ENCODE measurements at regions of chr19 and their contacts with region 1.

Region 1: GRCh38 chr19:58362272-58362994 is at the start of gene ZNF497:
- DNase-seq: peak; percentile 98
- ATAC-seq: peak; percentile 87
- H3K4me3 Mint-ChIP-seq: peak within 1 kb of the TSS; percentile 94
- H3K27ac Mint-ChIP-seq: peak within 1 kb of the TSS; percentile 94
- H3K4me1 Mint-ChIP-seq: peaks cover 13% of the 10 kb centered on the region
- H3K27me3 Mint-ChIP-seq: no peaks in the 10 kb centered on the region
- total RNA-seq, gene ZNF497: 1.7 to 2.1 TPM

Region 2: GRCh38 chr19:58317476-58318072 is 44.9 kb before region 1 on chr19:
- POLR2A ChIA-PET with region 1: no interaction called
- DNase-seq: no peak
- ATAC-seq: no peak
- H3K4me3 Mint-ChIP-seq: no peak overlapping the region
- H3K27ac Mint-ChIP-seq: no peak overlapping the region
- H3K4me1 Mint-ChIP-seq: no peaks in the 10 kb centered on the region
- H3K27me3 Mint-ChIP-seq: no peaks in the 10 kb centered on the region

Region 3: DNA sequence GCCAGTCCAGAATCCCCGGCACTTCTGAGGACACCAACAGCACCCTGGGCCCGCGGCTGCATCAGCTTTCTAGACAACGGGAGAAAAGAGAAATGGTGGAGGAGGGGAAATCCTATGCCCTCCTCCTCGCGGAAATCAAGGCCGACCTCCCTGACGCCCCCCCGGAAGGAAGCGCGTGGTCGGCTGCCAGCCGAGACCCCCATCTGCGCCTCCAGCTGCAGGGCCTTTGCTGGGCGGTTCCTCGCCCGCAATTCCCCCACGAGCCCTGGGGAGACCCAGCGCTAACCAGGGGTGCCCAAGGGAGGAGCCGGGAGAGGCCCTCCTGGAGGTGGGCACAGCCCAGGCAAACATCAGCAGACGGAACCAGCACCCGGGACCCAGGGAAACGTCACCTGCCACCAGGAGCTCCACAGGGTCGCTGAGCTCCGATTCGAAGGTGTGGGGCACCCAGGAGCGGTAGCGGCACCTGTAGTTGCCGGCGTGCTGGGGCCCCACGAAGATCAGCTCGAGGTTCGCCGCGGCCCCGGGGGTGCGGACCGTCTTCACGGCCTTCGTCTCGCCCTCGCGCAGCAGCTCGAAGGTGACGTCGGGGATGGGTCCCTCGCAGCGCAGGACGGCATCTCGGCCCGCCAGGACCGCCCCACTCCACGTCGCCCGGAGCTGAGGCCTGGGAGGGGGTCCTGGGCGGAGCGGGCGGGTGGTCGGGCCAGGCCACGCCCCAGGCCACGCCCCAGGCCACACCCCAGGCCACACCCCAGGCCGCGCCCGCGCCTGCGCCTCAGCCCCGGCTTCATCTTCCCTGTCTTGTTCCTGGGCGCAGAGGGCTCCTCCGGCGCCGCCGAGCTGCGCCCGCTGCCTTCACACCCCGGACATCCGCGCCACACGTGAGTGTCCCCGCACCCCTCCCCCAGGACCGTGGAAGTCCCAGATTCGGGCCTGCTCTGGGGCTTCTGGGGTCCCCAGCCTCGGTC is 15.2 kb before region 1 on chr19:
- POLR2A ChIA-PET with region 1: interaction called, 50 read pairs
- DNase-seq: peak; percentile 83
- ATAC-seq: peak; percentile 87
- H3K4me3 Mint-ChIP-seq: peak overlapping the region; percentile 98
- H3K27ac Mint-ChIP-seq: peak overlapping the region; percentile 92
- H3K4me1 Mint-ChIP-seq: peaks cover 22% of the 10 kb centered on the region
- H3K27me3 Mint-ChIP-seq: no peaks in the 10 kb centered on the region

Region 4: GRCh38 chr19:58372311-58373133 is 10.1 kb after region 1 on chr19:
- POLR2A ChIA-PET with region 1: interaction called, 14 read pairs
- DNase-seq: no peak
- ATAC-seq: no peak
- H3K4me3 Mint-ChIP-seq: no peak overlapping the region
- H3K27ac Mint-ChIP-seq: no peak overlapping the region
- H3K4me1 Mint-ChIP-seq: no peaks in the 10 kb centered on the region
- H3K27me3 Mint-ChIP-seq: no peaks in the 10 kb centered on the region

Region 5: GRCh38 chr19:58380722-58381466 is 18.5 kb after region 1 on chr19 and contains the start of gene ZNF837:
- POLR2A ChIA-PET with region 1: interaction called, 34 read pairs
- DNase-seq: peak; percentile 95
- ATAC-seq: peak; percentile 93
- H3K4me3 Mint-ChIP-seq: peak within 1 kb of the TSS; percentile 92
- H3K27ac Mint-ChIP-seq: peak within 1 kb of the TSS; percentile 96
- H3K4me1 Mint-ChIP-seq: peaks cover 17% of the 10 kb centered on the region
- H3K27me3 Mint-ChIP-seq: no peaks in the 10 kb centered on the region
- total RNA-seq, gene ZNF837: 2.9 to 3.5 TPM

Region 6: GRCh38 chr19:58386576-58387337 is 24.3 kb after region 1 on chr19 and contains the start of gene RPS5:
- POLR2A ChIA-PET with region 1: interaction called, 34 read pairs
- DNase-seq: peak; percentile 92
- ATAC-seq: peak; percentile 91
- H3K4me3 Mint-ChIP-seq: peak within 1 kb of the TSS; percentile 96
- H3K27ac Mint-ChIP-seq: peak within 1 kb of the TSS; percentile 96
- H3K4me1 Mint-ChIP-seq: peaks cover 32% of the 10 kb centered on the region
- H3K27me3 Mint-ChIP-seq: no peaks in the 10 kb centered on the region
- total RNA-seq, gene RPS5: 1,038 to 1,039 TPM

Measured in activated naive CD8-positive, alpha-beta T cell treated with anti-CD3 and anti-CD28 coated beads, Interleukin-2, amount 10 ng/mL, durations not matched to agents 7 days and 5 days (primary cell).